ENCODE measurements at regions of chr1 and their contacts with region 1.

Region 1: DNA sequence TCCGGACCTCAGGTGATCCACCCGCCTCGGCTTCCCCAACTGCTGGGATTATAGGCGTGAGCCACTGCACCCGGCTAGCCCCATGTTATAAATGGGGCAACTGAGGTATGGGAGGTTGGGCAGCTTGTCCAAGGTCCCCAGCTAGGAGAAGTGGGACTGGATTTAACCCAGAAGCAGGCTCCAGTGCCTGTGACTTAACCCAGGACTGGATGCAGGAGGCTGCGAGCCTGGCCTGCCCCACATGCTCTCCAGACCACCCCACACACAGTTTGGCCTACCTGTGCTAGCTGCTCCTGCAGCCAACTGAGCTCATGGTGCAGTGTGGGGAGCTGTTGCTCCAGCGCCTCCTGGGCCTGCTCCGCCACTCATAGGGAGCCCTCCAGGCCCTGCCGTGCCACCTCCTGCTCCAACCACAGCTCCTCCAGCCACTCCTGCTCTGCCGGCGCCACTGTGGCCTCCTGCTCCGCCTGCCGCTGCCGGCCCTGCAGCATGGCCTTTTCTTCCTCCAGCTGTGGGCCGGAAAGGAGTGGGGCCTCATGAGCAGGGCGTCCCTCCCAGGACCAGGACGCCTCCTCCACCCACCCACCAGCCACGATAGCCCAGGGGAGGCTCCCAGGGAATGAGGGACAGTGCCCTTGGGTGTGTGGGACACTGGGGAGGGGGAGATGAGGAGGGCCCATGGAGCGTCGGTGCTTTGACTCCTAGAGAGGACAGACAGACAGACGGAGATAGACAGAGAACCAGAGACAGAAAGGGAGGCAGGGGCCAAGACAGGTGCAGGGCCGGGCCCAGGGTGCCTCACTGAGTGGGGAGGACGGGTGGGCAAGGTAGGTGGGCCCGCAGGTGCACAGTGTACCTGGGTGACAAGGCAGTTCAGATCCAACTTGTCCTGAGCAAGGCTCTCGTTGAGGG is 12.4 kb upstream of the NBPF1 start:
- DNase-seq: peak; percentile 53
- H3K4me3 ChIP-seq: no peak overlapping the region
- H3K27ac ChIP-seq: no peak overlapping the region
- H3K4me1 ChIP-seq: no peaks in the 10 kb centered on the region; a peak in 1 of 4 replicates
- H3K27me3 ChIP-seq: no peaks in the 10 kb centered on the region
- CTCF ChIP-seq: no peak
- EP300 ChIP-seq: no peak
- RAD21 ChIP-seq: no peak

Region 2: DNA sequence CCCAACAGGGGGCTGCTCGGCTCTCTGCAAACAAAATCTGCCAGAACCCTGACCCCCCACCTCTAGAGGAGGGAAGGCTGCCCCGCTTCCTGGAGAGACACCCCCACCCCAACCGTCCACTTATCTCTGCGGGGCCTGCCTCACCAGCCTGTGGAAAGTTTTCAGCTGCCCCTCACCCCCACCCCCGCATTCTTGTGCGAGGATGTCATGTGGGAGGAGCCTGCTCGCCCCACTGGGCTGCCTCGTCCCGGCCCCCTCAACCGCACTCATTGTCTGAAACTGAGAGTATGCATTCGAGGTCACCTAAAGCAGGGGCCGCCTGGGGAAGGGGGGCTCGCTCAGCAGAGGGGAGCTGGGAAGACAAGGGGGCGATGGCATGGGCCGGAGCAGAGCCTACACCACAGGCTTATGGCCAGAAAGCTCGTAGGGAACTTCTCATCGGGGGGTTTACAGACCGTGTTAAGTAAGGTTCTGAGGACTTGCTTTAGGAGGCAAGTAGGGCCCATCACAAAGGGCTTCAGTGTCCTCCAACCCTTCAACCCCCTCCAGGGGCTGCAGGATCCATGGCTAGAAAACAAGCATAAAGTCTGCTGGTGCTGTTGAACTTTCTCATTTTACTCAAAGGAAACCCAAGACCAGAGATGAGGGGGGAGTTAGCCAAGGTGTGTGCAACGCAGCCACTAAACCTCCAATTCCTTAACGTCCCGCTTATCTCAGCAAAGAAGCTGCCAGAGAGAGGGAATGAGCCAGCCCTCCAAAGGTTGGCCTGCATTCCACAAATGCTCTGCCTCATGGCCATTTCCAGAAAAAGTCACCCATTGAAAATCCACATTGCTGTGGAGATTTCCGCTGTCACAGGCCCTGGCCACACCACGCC is 479.2 kb before region 1 on chr1:
- CTCF ChIA-PET with region 1: no interaction called
- POLR2A ChIA-PET with region 1: no interaction called
- DNase-seq: peak; percentile 59
- H3K4me3 ChIP-seq: peak overlapping the region; percentile 30 to 60; a peak in 3 of 4 replicates
- H3K27ac ChIP-seq: peak overlapping the region; percentile 81 to 98
- H3K4me1 ChIP-seq: peaks cover 24 to 72% of the 10 kb centered on the region in 2 experiments; a peak in 3 of 4 replicates
- H3K27me3 ChIP-seq: no peaks in the 10 kb centered on the region
- CTCF ChIP-seq: no peak
- EP300 ChIP-seq: peak in 1 of 2 experiments; percentile 92; a peak in 2 of 4 replicates
- RAD21 ChIP-seq: no peak

Region 3: GRCh38 chr1:16607433-16607851 is 18.3 kb before region 1 on chr1:
- CTCF ChIA-PET with region 1: interaction called, 130 read pairs
- POLR2A ChIA-PET with region 1: no interaction called
- DNase-seq: no peak
- H3K4me3 ChIP-seq: no peak overlapping the region
- H3K27ac ChIP-seq: no peak overlapping the region
- H3K4me1 ChIP-seq: peaks cover 10 to 19% of the 10 kb centered on the region in 2 experiments; a peak in 3 of 4 replicates
- H3K27me3 ChIP-seq: no peaks in the 10 kb centered on the region
- CTCF ChIP-seq: no peak
- EP300 ChIP-seq: no peak
- RAD21 ChIP-seq: no peak

Region 4: DNA sequence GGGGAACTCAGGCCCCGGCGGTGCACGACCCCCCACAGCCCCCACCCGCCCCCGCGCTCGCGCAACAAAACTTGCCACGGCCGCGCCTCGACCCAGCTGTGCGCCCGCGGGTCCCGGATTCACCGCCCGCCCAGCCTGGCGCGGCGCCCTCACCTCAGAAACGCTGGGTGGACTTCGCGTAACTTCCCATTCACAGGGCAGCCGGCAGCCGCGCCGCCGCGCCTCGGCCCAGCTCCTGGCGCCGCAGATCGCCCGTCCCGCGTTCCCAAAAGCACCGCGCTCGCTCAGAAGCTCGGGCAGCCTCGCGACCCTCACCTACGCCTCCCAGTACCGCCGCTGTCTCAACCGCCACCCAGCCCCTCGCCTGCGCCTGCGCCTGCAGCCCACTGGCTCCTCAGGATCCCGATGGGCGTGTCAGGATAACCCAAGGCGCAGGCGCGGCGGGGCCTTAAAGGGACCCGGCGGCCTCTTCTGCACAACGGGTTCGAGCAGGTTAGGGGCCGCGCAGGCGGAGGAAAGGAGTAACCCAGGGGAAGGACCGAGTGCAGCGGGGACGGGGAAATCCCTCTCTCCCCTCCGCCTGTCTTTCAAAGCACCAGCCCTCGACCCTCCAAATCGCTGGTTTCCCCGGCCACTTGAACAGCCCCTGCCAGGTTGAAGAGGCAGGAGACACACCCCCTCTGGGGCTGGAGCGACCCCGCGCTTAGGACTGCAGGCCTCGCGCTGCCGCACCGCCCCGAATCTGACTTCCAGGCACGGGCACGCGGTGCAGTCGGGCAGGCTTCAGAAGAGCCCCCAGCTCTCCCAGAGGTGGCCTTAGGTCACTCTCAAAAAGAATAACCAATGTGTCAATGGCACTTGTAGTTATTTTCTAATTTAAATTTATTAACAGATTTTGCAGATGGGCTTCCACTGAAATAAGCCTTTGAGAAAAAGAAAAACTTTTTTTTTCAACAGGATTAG is 12.3 kb before region 1 on chr1 and contains the start of gene NBPF1:
- CTCF ChIA-PET with region 1: interaction called, 130 read pairs
- POLR2A ChIA-PET with region 1: interaction called, 4 read pairs
- DNase-seq: peak; percentile 100
- H3K4me3 ChIP-seq: peak within 1 kb of the TSS; percentile 64 to 100
- H3K27ac ChIP-seq: peak within 1 kb of the TSS; percentile 65 to 93
- H3K4me1 ChIP-seq: peaks cover 13 to 17% of the 10 kb centered on the region in 2 experiments; a peak in 3 of 4 replicates
- H3K27me3 ChIP-seq: no peaks in the 10 kb centered on the region
- CTCF ChIP-seq: 0 out of 2 replicates have a peak, but pooled peaks have one; percentile 5
- EP300 ChIP-seq: peak in 1 of 2 experiments; percentile 34; a peak in 1 of 4 replicates
- RAD21 ChIP-seq: 0 out of 2 replicates have a peak, but pooled peaks have one; percentile 13
- polyA plus RNA-seq, gene NBPF1: 29.8 and 39.7 TPM in 2 replicates

Region 5: DNA sequence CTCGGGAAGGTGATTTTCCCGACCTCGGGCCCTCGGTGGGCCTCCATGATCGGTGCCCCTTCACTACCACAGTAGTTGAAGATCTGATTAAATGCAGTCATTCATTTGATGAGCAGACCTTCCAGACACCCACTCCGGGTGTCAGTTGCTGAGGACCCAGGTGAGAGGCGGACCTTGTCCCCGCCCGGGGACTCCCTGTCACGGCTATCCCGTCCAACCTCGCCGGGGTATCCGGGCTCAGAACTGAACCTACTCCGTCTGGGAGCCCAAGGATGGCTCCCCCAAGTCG is 18.4 kb after region 1 on chr1:
- CTCF ChIA-PET with region 1: interaction called, 11 read pairs
- POLR2A ChIA-PET with region 1: interaction called, 6 read pairs
- DNase-seq: no peak
- H3K4me3 ChIP-seq: peak overlapping the region; percentile 64 to 100
- H3K27ac ChIP-seq: peak overlapping the region; percentile 50 to 91
- H3K4me1 ChIP-seq: peaks cover 15 to 25% of the 10 kb centered on the region in 2 experiments; a peak in 2 of 4 replicates
- H3K27me3 ChIP-seq: no peaks in the 10 kb centered on the region
- CTCF ChIP-seq: no peak
- EP300 ChIP-seq: no peak
- RAD21 ChIP-seq: no peak

Region 6: GRCh38 chr1:16946646-16947045 is 320.9 kb after region 1 on chr1:
- CTCF ChIA-PET with region 1: interaction called, 10 read pairs
- POLR2A ChIA-PET with region 1: interaction called, 3 read pairs
- DNase-seq: no peak
- H3K4me3 ChIP-seq: no peak overlapping the region
- H3K27ac ChIP-seq: no peak overlapping the region
- H3K4me1 ChIP-seq: no peaks in the 10 kb centered on the region; a peak in 1 of 4 replicates
- H3K27me3 ChIP-seq: no peaks in the 10 kb centered on the region
- CTCF ChIP-seq: no peak
- EP300 ChIP-seq: no peak
- RAD21 ChIP-seq: no peak